ENCODE measurements at regions of chr19 and their contacts with region 1.

Region 1: DNA sequence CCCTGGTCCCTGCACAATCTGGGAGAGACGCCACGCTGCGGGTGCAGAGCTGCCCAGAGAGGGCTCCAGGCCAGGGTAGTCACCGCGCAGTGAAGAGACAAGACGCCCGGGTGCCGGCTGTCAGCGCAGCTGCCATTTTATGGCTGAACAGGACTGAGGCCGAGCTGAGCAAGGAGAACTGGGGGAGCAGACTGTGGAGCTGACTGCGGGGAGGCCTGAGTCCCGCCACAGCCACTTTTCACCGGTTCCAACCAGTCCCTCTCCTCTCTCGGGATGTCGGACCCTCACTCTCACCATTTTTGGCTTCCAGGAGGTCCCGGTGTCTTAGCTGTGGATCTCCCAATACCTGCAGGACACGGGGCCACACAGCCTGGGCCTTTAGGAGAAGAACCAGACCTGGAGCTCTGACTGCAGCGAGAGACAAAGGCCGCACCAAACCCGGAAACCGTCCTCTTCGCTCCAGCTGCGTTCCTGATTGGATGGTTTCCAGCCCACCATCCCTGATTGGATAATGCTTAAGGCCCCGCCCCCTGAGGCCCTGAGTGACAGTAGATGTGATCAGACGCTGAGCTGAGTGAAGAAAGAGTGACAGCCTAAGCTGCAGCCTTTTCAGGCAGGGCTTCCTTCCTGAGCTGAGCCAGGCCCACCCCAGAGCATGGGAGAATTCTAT is at the start of gene ZNF626:
- DNase-seq: peak; percentile 96
- H3K4me3 Mint-ChIP-seq: peak within 1 kb of the TSS; percentile 91
- H3K27ac Mint-ChIP-seq: peak within 1 kb of the TSS; percentile 90
- H3K4me1 Mint-ChIP-seq: peaks cover 43% of the 10 kb centered on the region
- H3K27me3 Mint-ChIP-seq: no peaks in the 10 kb centered on the region
- total RNA-seq, gene ZNF626: 8.7 to 12.5 TPM

Region 2: GRCh38 chr19:20044663-20045062 is 616.6 kb before region 1 on chr19:
- CTCF ChIA-PET with region 1: no interaction called
- POLR2A ChIA-PET with region 1: no interaction called
- intact Hi-C with region 1: no loop called
- DNase-seq: no peak
- H3K4me3 Mint-ChIP-seq: no peak overlapping the region
- H3K27ac Mint-ChIP-seq: no peak overlapping the region
- H3K4me1 Mint-ChIP-seq: no peaks in the 10 kb centered on the region
- H3K27me3 Mint-ChIP-seq: no peaks in the 10 kb centered on the region

Region 3: GRCh38 chr19:20776083-20777076 is 115.1 kb after region 1 on chr19 and contains the start of gene ZNF66:
- CTCF ChIA-PET with region 1: interaction called, 4 read pairs
- POLR2A ChIA-PET with region 1: interaction called, 11 read pairs
- intact Hi-C with region 1: loop called (anchors 1 kb)
- DNase-seq: peak; percentile 97
- H3K4me3 Mint-ChIP-seq: peak within 1 kb of the TSS; percentile 100
- H3K27ac Mint-ChIP-seq: peak within 1 kb of the TSS; percentile 97
- H3K4me1 Mint-ChIP-seq: peaks cover 16% of the 10 kb centered on the region
- H3K27me3 Mint-ChIP-seq: no peaks in the 10 kb centered on the region
- total RNA-seq, gene ZNF66: 5.0 to 6.0 TPM